BJ (cell line): ENCODE measurements at regions of chr12 and their contacts with region 1.

Region 1: DNA sequence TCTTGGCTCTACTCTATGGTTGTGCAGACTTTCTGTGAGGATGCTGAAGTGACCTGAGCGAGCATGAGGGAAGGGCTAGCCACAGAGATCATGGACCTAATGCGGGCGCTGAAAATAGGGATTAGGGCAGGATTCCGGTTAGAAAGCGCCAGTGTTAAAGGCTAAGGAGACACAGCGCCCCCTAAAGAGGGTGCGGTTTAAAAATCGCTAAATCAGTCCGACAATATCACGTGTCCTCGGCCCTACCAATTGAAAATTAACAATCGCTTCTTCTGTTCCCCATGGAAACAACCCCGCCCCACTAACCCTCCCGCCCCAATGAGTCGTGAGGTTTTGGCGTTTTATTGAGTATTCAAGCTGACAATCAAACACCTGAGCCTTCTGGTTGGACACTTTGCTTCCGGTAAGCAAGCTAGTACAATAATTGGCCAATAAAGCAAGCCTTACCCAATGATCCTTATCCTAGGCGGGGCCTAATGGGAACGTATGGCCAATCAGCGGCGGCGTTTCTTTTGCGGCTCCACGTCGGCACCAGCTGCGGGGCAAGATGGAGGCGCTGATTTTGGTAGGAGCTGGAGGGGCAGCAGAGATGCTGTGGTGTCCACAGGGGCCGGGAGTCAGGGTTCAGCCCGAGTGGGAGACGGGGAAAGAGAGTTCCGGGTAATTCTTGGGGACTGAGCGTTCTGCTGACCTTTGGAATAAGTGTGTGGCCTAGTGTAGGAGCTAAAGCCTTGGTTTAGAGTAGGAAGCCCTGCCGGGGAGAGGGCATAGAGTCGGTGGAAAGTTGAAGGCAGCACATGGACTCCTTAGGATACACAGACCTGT is at the start of gene COPZ1:
- DNase-seq: peak; percentile 100
- H3K4me3 ChIP-seq: peak within 1 kb of the TSS; percentile 65
- H3K27me3 ChIP-seq: no peaks in the 10 kb centered on the region
- CTCF ChIP-seq: peak; percentile 82
- polyA plus RNA-seq, gene COPZ1: 203 and 341 TPM in 2 replicates

Region 2: GRCh38 chr12:53791735-53792326 is 533.0 kb before region 1 on chr12:
- CTCF ChIA-PET with region 1: no interaction called
- POLR2A ChIA-PET with region 1: no interaction called
- DNase-seq: no peak
- H3K4me3 ChIP-seq: no peak overlapping the region
- H3K27me3 ChIP-seq: peaks cover 18% of the 10 kb centered on the region
- CTCF ChIP-seq: peak; percentile 63

Region 3: DNA sequence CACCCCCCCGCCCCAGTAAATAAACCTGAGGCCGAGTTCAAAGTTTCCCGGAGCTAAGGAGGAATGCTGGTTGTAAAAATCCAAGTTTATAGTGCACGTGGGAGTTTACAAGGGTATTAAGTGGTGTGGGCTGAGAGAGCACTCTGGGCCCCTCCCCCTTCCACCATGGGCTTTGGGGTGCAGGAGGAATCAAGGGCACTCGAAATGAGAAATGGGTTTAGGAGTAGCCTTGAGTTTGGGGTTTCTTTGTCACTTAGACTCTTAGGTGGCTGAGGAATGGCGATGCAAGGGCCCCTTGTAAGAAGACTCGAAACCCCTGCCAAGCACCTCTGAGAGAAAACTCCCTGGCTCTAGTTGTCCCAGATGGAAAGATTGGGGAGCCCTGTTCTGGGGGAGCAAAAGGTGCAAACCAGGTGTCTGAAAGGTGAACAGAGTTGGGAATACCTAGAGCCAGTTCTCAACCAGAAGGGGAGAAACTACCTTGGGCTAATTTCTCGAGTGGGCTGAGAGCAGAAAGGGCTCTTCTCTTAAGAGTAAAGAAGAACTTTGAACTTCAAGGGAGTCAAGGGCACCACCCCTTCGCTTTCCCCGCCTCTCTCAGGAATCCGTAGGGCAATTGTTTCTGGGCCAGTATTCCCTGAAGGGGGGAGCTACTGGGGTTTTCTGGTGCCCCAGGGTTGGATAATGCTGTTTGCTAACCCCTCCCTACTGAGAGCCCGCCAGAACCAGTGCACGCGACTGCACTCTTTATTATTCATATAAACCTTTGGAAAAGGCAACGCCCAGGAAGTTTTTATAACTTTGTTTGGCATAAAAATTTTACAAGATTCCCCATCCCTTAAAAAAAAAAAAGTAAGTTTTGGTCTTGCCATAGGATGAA is 346.1 kb before region 1 on chr12:
- CTCF ChIA-PET with region 1: no interaction called
- POLR2A ChIA-PET with region 1: interaction called, 10 read pairs
- DNase-seq: peak; percentile 75
- H3K4me3 ChIP-seq: no peak overlapping the region
- H3K27me3 ChIP-seq: no peaks in the 10 kb centered on the region
- CTCF ChIP-seq: no peak

Region 4: DNA sequence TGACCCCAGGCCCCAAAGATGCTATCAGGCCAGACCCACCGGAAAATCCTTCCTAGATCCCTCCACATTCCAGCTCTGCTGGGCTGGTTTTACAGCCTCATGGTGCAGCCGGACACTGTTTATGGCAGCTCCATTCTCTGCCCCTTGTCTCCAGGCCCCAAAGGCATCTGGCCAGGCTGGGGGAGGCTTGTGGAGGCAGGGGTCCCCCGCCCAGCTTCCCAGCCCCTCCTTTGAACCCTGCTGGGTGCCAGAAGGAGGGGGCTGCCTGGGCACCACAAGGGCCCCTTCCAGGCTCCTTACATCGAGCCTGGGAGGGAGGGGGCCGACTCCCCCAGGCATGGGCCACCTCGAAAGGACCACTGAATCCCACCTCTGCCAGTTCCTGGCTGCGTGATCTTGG is 116.2 kb before region 1 on chr12:
- CTCF ChIA-PET with region 1: no interaction called
- POLR2A ChIA-PET with region 1: no interaction called
- DNase-seq: no peak
- H3K4me3 ChIP-seq: no peak overlapping the region
- H3K27me3 ChIP-seq: peaks cover 16% of the 10 kb centered on the region
- CTCF ChIP-seq: no peak

Region 5: DNA sequence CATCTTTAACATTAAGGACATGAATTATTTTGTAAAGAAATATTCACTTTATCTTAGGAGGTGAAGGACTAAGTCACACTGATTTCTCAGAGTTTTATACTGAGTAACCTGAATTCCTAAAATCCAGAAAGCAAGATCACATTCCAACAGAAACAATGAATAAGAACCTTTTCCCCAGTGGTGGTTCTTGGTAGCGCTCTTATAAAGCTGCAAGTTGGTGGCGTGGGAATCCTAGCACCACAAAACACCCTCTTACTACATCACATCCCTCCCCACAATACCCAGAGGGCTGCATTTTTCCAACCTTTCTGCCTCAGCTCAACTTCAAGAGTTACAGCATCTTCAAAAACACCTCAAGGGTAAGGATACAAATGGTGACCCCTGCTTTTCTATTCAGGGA is 92.0 kb before region 1 on chr12:
- CTCF ChIA-PET with region 1: interaction called, 10 read pairs
- POLR2A ChIA-PET with region 1: no interaction called
- DNase-seq: no peak
- H3K4me3 ChIP-seq: no peak overlapping the region
- H3K27me3 ChIP-seq: no peaks in the 10 kb centered on the region
- CTCF ChIP-seq: peak; percentile 39

Region 6: DNA sequence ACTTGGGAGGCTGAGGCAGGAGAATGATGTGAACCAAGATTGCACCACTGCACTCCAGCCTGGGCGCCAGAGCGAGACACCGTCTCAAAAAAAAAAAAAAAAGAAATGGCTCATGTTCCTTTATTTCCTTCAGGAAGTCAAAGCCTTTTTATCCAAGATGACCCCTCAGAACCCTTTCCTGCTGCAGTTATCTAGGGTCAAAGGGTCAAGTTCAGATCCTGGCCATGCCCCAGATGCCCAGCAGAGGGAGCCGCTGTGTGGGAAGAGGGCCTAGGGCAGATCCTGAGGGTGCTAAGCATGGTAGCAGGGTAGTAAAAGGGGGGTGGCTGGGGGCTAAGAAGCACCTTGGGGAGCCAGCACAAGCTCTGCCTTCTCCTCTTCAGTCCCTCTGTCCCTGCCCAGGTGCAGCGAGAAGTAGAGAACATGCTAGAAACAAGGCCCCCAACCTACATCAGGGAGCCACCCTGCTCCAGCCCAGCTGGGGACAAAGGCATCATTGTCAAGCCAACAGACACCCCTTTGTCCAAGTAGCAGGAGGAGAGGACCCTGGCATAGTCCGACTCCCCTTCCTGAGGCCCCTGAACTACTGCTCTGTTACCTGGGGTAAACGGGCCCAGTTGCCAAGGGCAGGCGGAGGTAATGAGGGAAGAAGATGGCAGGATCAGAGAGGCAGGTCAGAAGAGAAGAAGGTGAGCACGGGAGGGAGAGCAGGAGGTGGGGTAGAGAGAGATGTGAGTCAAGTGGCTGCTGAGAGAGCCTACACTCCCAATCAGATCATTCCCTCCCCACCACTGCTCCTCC is 30.5 kb before region 1 on chr12:
- CTCF ChIA-PET with region 1: interaction called, 35 read pairs
- POLR2A ChIA-PET with region 1: interaction called, 6 read pairs
- DNase-seq: no peak
- H3K4me3 ChIP-seq: no peak overlapping the region
- H3K27me3 ChIP-seq: peaks cover 3% of the 10 kb centered on the region; the same call in 1 of the 2 replicates
- CTCF ChIP-seq: peak; percentile 89

Region 7: DNA sequence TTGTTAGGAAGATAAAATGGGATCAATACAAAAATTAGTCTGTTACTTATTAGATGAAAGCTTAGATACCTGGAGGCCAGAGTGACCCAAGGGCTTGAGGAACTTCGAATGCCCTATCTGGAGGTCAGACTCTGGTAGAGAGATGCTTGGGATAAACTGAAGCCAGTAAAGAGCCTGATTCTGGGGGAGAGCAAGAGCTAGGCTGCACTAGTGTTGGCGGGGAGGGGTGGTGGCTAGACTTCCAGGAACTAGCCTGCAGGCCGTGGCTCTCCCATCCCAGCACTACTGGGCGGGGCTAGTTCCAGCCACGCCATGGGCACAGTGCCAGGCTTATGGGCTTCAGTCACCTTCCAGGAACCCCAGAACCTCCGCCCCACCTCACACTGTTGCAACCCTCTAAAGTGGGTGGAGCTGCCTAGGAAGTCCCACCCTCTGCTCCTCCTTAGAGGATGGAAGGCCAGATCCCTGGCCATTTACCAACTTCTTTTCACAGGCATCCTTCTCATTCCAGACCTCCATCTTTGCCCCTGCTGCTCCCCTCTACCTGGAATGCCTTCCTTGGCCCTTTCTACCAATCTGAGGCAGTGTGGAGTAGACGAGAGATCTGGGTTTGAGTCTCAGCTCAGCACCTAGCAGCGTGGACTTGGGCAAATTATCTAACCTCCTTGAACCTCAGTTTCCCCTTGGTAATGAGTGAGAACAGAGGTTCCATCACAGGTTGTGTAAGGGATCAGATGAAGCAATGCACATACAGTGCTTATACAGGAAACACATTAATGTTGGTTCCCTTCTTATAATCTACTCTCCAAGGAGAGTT is 17.7 kb before region 1 on chr12:
- CTCF ChIA-PET with region 1: interaction called, 13 read pairs
- POLR2A ChIA-PET with region 1: no interaction called
- DNase-seq: no peak
- H3K4me3 ChIP-seq: no peak overlapping the region
- H3K27me3 ChIP-seq: peaks cover 4% of the 10 kb centered on the region
- CTCF ChIP-seq: no peak

Region 8: DNA sequence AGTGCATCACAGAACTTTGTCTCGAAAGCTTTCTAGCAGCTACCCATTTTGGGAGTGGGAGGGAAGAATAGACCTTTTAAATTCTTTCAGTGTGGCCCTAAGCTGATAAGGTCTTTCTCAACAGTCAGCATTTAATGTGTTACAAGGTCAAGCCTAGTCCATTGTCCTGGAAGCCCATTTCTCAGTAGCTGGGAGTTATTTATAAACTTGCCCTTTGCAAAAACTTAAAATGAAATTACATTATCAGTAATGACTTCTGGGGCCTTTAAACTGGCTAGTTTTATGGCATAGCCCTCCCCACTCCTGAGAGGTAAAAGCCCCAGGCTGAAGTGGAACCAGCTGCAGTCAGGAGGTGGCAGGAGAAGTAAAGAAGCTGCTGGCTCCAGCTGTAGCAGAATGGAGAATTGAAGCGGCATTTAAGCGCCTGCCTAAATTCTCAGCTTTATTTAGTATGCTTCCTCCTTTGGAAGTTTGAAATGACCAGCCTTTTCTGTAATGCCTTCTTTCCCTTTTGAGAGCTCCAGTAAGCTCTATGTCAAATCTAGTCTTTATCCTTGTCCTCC is 12.5 kb after region 1 on chr12:
- CTCF ChIA-PET with region 1: interaction called, 15 read pairs
- POLR2A ChIA-PET with region 1: interaction called, 6 read pairs
- DNase-seq: no peak
- H3K4me3 ChIP-seq: no peak overlapping the region
- H3K27me3 ChIP-seq: no peaks in the 10 kb centered on the region
- CTCF ChIP-seq: peak; percentile 31; the same call in 1 of the 2 replicates

Region 9: DNA sequence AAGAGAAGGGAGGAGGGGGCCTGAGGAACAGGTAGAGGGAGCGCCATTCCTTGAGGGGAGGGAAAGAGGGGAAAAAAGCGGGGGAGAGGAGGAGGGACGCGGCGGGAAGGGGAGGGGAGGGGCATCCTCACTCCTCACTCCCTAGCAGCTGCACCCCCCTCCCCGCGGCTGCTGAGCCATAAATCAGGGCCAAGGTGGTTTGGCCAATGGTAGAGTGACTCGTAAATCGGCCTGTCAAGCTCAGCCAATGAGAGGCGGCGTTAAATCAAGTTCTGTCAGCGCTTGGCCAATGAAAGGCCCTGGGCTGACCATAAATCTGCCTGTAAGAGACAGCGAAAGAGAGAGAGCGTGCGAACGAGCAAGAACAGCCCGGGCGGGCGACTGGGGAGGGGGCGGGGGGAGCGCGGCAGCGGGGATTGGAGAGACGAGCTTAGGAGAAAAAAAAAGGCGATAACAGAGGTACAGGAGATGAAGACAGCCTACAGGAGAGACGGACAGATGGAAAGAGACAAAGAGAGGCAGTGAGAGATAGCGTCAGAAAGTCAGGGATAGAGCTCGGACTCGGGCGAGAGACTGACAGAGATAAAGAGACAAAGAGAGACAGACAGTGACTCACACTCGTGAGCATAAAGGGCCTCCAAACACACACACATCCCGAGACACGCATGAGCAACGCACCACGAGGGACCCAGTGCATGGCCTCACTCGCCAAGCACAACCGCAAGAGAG is 34.4 kb after region 1 on chr12:
- CTCF ChIA-PET with region 1: interaction called, 114 read pairs
- POLR2A ChIA-PET with region 1: no interaction called
- DNase-seq: peak; percentile 93
- H3K4me3 ChIP-seq: peak overlapping the region; percentile 55
- H3K27me3 ChIP-seq: no peaks in the 10 kb centered on the region
- CTCF ChIP-seq: no peak